HepG2 (cell line): ENCODE measurements at regions of chr3 and their contacts with region 1.

Region 1: DNA sequence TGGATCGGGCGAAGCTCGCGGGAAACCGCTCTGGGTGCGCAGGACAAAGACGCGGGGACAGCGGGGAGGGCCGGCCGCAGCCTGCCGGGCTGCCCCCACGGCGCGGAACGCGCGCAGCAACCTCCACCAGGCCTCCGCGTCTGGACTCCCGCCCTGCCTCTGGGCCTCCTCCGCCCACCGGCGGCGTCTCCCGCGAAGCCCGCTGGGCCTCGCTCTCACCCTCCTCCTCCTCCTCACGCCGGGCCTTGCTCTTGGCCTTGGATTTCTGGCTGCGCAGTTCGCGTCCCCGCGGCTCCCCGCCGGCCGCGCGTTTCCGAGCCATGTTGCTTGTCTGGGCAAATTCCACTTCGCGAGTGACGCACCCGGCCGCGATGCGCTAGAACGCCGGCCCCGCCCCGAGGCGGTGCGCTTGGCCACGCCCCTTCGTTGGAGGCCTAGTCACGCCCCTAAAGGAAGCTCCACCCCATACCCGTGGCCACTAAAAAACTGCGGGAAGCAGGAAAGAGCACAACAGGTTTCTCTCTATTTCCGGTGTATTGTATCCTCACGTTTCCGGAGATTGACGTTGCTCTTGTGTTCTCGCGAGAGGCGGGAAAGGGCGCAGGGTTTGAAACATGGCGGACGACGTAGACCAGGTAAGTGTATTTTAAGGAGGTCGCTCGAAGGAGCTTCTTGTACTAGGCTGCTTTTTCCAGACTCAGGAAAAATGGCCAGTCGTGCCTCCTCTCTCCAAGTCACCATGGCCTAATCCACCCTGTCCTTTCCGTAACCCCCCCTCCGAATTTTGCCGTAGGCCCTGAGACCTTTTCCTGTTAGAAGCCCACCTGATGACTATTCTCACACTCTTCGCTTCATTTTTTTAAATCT is at the starts of genes LSM3 and XPC:
- DNase-seq: peak; percentile 98
- ATAC-seq: peak; percentile 96
- H3K4me3 ChIP-seq: peak within 1 kb of the TSS; percentile 88 to 95 (median 95)
- H3K27ac ChIP-seq: peak within 1 kb of the TSS; percentile 91
- H3K4me1 ChIP-seq: peaks cover 67% of the 10 kb centered on the region
- H3K27me3 ChIP-seq: no peaks in the 10 kb centered on the region; a peak in 1 of 5 replicates
- CTCF ChIP-seq: no peak
- EP300 ChIP-seq: no peak; a peak in 1 of 4 replicates
- POLR2A ChIP-seq: peak; percentile 83 to 91
- RAD21 ChIP-seq: peak; percentile 17; the same call in 1 of the 2 replicates
- total RNA-seq, gene LSM3: 19.4 and 28.7 TPM in 2 replicates
- total RNA-seq, gene XPC: 19.2 and 24.1 TPM in 2 replicates

Region 2: GRCh38 chr3:13782501-13782900 is 396.0 kb before region 1 on chr3:
- CTCF ChIA-PET with region 1: no interaction called
- POLR2A ChIA-PET with region 1: no interaction called
- in situ Hi-C with region 1: no loop called
- intact Hi-C with region 1: no loop called
- DNase-seq: no peak
- ATAC-seq: peak; percentile 28; the same call in 1 of the 3 replicates
- H3K4me3 ChIP-seq: no peak overlapping the region
- H3K27ac ChIP-seq: no peak overlapping the region
- H3K4me1 ChIP-seq: no peaks in the 10 kb centered on the region
- H3K27me3 ChIP-seq: peaks cover 23 to 73% of the 10 kb centered on the region in 2 experiments
- CTCF ChIP-seq: no peak
- EP300 ChIP-seq: no peak
- POLR2A ChIP-seq: no peak
- RAD21 ChIP-seq: no peak

Region 3: GRCh38 chr3:14113965-14114635 is 64.4 kb before region 1 on chr3:
- CTCF ChIA-PET with region 1: no interaction called
- POLR2A ChIA-PET with region 1: interaction called, 21 read pairs
- in situ Hi-C with region 1: no loop called
- intact Hi-C with region 1: loop called (anchors 2 kb)
- DNase-seq: peak; percentile 47
- ATAC-seq: peak; percentile 72
- H3K4me3 ChIP-seq: no peak overlapping the region
- H3K27ac ChIP-seq: peak overlapping the region; percentile 44
- H3K4me1 ChIP-seq: peaks cover 40% of the 10 kb centered on the region
- H3K27me3 ChIP-seq: no peaks in the 10 kb centered on the region
- CTCF ChIP-seq: peak; percentile 77
- EP300 ChIP-seq: no peak
- POLR2A ChIP-seq: no peak
- RAD21 ChIP-seq: peak; percentile 53; the same call in 1 of the 2 replicates

Region 4: GRCh38 chr3:14124615-14125190 is 53.8 kb before region 1 on chr3 and contains the starts of genes CHCHD4 and TMEM43:
- CTCF ChIA-PET with region 1: no interaction called
- POLR2A ChIA-PET with region 1: interaction called, 75 read pairs
- in situ Hi-C with region 1: no loop called
- intact Hi-C with region 1: loop called (anchors 2 kb)
- DNase-seq: peak; percentile 99
- ATAC-seq: peak; percentile 86
- H3K4me3 ChIP-seq: peak within 1 kb of the TSS; percentile 80 to 95 (median 88)
- H3K27ac ChIP-seq: peak within 1 kb of the TSS; percentile 95
- H3K4me1 ChIP-seq: peaks cover 53% of the 10 kb centered on the region
- H3K27me3 ChIP-seq: no peaks in the 10 kb centered on the region; a peak in 1 of 5 replicates
- CTCF ChIP-seq: no peak
- EP300 ChIP-seq: no peak; a peak in 1 of 4 replicates
- POLR2A ChIP-seq: peak; percentile 78
- RAD21 ChIP-seq: no peak
- total RNA-seq, gene CHCHD4: 24.1 and 32.0 TPM in 2 replicates
- total RNA-seq, gene TMEM43: 25.9 and 50.5 TPM in 2 replicates

Region 5: DNA sequence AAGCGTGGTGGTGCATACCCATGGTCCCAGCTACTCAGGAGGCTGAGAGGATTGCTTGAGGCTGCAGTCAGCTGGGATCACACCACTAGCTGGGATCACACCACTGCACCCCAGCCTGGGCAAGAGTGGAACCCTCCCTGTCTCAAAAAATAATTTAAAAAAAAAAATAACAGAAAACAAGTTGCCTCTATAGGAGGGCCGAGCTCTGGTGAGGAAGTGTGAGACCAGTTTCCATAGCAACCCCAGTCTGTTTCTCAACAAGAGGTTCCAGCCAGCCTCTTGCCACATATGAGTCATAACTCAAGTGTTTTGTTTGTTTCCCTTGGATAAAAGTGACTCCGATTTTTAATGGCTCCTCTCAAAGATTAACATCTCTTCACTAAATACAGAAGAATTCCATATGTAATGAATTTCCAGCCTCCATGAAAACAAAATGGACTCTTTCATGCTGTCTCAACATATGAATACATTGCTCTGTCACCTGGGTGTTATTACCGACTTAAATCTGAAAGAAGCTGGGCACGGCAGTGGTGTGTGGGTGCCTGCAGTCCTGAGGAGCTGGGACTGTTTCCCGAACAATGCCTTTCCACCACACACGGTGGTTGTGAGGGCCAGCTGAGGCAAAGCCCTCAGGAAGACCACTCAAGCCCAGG is 33.9 kb before region 1 on chr3:
- CTCF ChIA-PET with region 1: no interaction called
- POLR2A ChIA-PET with region 1: interaction called, 21 read pairs
- in situ Hi-C with region 1: no loop called
- intact Hi-C with region 1: no loop called
- DNase-seq: peak; percentile 96
- ATAC-seq: peak; percentile 71
- H3K4me3 ChIP-seq: peak overlapping the region in 1 of 3 experiments; percentile 11; a peak in 1 of 6 replicates
- H3K27ac ChIP-seq: peak overlapping the region; percentile 96
- H3K4me1 ChIP-seq: peaks cover 20% of the 10 kb centered on the region
- H3K27me3 ChIP-seq: no peaks in the 10 kb centered on the region
- CTCF ChIP-seq: no peak
- EP300 ChIP-seq: peak in 1 of 2 experiments; percentile 64; a peak in 2 of 4 replicates
- POLR2A ChIP-seq: no peak
- RAD21 ChIP-seq: no peak

Region 6: GRCh38 chr3:14396031-14396692 is 217.7 kb after region 1 on chr3:
- CTCF ChIA-PET with region 1: no interaction called
- POLR2A ChIA-PET with region 1: no interaction called
- in situ Hi-C with region 1: no loop called
- intact Hi-C with region 1: no loop called
- DNase-seq: no peak
- ATAC-seq: no peak
- H3K4me3 ChIP-seq: no peak overlapping the region
- H3K27ac ChIP-seq: no peak overlapping the region
- H3K4me1 ChIP-seq: peaks cover 37% of the 10 kb centered on the region
- H3K27me3 ChIP-seq: peaks cover 3 to 11% of the 10 kb centered on the region in 2 experiments; a peak in 1 of 5 replicates
- CTCF ChIP-seq: no peak
- EP300 ChIP-seq: no peak
- POLR2A ChIP-seq: no peak
- RAD21 ChIP-seq: no peak